Left cardiac atrium (tissue), 4 donors: ENCODE measurements at regions of chr10 and their contacts with region 1.

Region 1: GRCh38 chr10:114520453-114520852 is 116.2 kb upstream of the AFAP1L2 start:
- DNase-seq: no peak
- ATAC-seq: peak in 1 of 2 donors; percentile 22

Region 2: GRCh38 chr10:114482480-114483304 is 37.8 kb before region 1 on chr10:
- intact Hi-C with region 1: loop called in 1 of 2 experiments (anchors 5 kb)
- DNase-seq: no peak
- ATAC-seq: peak; percentile 25 to 42